ENCODE measurements at regions of chr17 and their contacts with region 1.

Region 1: DNA sequence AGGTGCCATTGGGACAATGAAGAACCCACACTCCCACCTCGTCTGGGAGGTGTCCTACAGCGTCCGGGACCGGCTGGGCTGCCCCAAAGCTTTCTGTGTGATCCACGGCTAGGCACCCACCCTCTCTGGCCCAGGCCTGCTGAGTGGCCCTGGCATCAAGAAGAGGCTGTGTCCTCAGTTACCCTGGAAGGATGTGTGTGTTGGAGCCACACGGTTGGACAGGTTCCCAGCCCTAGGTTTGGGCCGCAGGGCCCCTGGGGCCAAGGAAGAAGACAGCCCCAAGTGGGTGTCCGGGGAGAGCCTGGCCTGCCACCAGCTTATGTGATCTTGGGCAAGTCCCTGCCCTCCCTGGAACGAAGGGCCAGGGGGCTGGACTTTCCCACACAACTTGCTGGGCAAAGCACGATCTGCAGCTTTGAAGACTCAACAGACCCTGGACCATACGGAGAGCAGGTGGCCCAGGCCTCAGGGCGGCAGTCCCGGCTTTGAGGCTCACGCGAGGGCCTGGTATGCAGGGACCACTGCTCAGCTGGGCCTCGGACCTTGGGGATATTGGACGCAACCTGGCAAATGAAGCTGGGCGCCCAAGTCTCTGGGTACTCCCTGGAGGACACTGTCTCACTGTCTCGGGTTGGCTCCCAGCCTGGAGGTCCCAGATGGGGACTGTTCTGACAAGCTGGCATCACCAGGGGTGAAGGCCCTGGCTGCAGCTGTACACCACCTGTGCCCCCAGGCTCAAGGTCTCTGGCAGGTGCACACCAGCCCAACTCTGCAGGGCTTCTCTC is 17.5 kb downstream of the MYBBP1A start:
- DNase-seq: no peak
- H3K4me3 ChIP-seq: no peak overlapping the region
- H3K27ac ChIP-seq: no peak overlapping the region
- H3K4me1 ChIP-seq: peaks cover 5% of the 10 kb centered on the region
- H3K27me3 ChIP-seq: no peaks in the 10 kb centered on the region
- CTCF ChIP-seq: no peak

Region 2: GRCh38 chr17:4565209-4566141 is 27.8 kb after region 1 on chr17:
- CTCF ChIA-PET with region 1: interaction called, 15 read pairs
- POLR2A ChIA-PET with region 1: no interaction called
- intact Hi-C with region 1: no loop called
- DNase-seq: peak; percentile 88
- H3K4me3 ChIP-seq: no peak overlapping the region
- H3K27ac ChIP-seq: no peak overlapping the region
- H3K4me1 ChIP-seq: no peaks in the 10 kb centered on the region
- H3K27me3 ChIP-seq: no peaks in the 10 kb centered on the region
- CTCF ChIP-seq: peak; percentile 92